Right cardiac atrium (tissue), 5 donors: ENCODE measurements at regions of chr18 and their contacts with region 1.

Region 1: GRCh38 chr18:50780144-50780543 is 39.7 kb downstream of the MRO start:
- DNase-seq: no peak
- ATAC-seq: no peak
- H3K4me3 ChIP-seq: no peak overlapping the region
- H3K27ac ChIP-seq: no peak overlapping the region
- H3K4me1 ChIP-seq: peaks cover 3% of the 10 kb centered on the region
- H3K27me3 ChIP-seq: no peaks in the 10 kb centered on the region

Region 2: GRCh38 chr18:50507120-50507590 is 273.0 kb before region 1 on chr18:
- intact Hi-C with region 1: loop called (anchors 2 to 5 kb)
- DNase-seq: peak; percentile 47 to 75 (median 63)
- ATAC-seq: peak; percentile 75 to 78
- H3K4me3 ChIP-seq: no peak overlapping the region
- H3K27ac ChIP-seq: no peak overlapping the region
- H3K4me1 ChIP-seq: no peaks in the 10 kb centered on the region
- H3K27me3 ChIP-seq: no peaks in the 10 kb centered on the region

Region 3: GRCh38 chr18:50662177-50662576 is 118.0 kb before region 1 on chr18:
- intact Hi-C with region 1: loop called in 2 of 4 experiments (anchors 5 to 10 kb)
- DNase-seq: no peak
- ATAC-seq: no peak
- H3K4me3 ChIP-seq: no peak overlapping the region
- H3K27ac ChIP-seq: no peak overlapping the region
- H3K4me1 ChIP-seq: peaks cover 10% of the 10 kb centered on the region
- H3K27me3 ChIP-seq: no peaks in the 10 kb centered on the region